ENCODE measurements at regions of chr2 and their contacts with region 1.

Region 1: DNA sequence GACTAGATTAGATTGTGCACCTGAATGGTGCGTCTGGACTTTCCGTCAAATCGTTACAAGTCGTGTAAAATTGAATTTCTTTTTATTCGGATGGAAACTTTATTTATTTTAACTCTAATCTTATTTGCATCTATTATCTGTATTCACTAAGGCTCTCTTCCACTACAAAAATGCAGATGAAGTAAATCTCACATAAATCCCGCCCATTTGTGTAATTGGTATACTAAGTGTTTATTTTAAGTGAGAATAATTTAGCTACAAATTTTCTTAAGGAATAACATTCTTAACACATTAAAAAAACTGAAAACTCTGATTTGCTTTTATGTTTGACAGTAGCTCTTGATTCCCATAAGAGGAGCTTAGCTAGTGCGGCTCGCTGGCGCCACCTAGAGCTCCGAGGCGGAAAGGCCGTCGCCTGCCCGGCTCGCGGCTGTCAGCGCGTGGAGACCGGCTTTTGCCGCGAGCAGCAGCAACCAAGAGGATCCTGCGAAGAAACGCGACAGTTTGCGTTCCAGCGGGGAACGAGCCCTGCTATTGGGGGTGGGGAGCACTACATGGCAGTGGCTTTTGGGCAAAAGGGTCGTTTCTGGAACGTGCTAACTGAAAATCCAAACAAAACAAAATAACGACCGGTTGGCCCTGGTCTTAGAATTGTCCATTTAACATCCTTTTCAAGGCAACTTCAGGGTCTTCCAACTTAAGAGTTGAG is 6.7 kb downstream of the SP9 start:
- DNase-seq: peak; percentile 78 to 90 (median 86)
- ATAC-seq: peak; percentile 87
- H3K4me3 ChIP-seq: no peak overlapping the region
- H3K4me3 Mint-ChIP-seq: peak overlapping the region; percentile 66 to 86 (median 79)
- H3K27ac ChIP-seq: no peak overlapping the region
- H3K27ac Mint-ChIP-seq: peak overlapping the region in 8 of 9 donors; percentile 73 to 93 (median 87)
- H3K4me1 ChIP-seq: peaks cover 22 to 32% of the 10 kb centered on the region in 2 donors
- H3K4me1 Mint-ChIP-seq: peaks cover 15 to 53% (median 39%) of the 10 kb centered on the region in 7 donors
- H3K27me3 ChIP-seq: peaks cover 47 to 64% of the 10 kb centered on the region in 2 donors
- H3K27me3 Mint-ChIP-seq: peaks cover 49 to 78% (median 71%) of the 10 kb centered on the region in 5 donors

Region 2: DNA sequence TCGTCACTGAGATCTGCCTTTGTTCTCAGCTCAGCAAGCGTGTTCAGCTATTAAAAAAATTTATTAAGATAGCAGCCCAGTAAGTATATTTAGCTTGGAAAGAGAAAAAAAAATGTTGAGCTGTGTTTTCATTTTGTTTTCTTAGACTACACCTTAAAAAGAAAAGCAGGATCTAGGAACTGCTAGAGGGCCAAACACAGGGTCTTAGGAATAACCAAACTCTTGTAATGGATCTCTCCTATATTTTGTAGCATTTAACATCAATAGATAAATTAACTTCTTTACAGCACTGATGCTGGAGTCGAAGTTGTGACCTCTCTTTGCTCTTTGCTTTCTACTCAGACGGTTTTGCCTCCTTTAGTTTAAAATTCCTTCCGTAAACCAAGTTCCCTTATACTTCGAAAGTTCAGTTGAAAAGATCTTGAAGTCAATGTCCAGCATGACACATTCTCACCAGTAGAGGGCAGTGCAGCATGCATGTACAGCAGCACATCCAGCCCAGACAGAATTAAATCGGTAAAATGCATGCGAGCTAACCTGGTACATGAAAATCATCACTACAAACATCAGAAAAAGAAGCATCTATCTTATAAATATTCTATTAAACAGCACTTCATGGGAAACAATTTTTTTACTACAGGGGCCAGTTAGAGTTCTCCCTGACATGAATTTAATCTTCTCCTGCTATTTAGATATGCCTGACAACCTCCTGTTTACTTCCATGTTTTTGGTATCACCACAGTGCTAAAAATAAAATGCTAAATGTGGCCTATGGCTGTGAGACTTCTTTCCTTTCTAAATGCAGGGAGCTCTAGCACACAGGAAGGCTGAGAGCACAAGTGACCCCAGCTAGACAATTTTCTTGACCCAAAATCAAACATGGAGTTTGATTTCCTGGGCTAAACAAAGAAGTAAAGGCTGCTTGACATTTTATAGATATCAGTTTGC is 1314.0 kb before region 1 on chr2:
- CTCF ChIA-PET with region 1: interaction called, 17 read pairs
- POLR2A ChIA-PET with region 1: no interaction called
- intact Hi-C with region 1: loop called (anchors 1 to 5 kb)
- DNase-seq: peak; percentile 20 to 75 (median 63)
- ATAC-seq: peak; percentile 91
- H3K4me3 ChIP-seq: no peak overlapping the region
- H3K4me3 Mint-ChIP-seq: no peak overlapping the region
- H3K27ac ChIP-seq: no peak overlapping the region
- H3K27ac Mint-ChIP-seq: no peak overlapping the region
- H3K4me1 ChIP-seq: no peaks in the 10 kb centered on the region
- H3K4me1 Mint-ChIP-seq: peaks cover 0 to 7% (median 3%) of the 10 kb centered on the region in 7 donors
- H3K27me3 ChIP-seq: no peaks in the 10 kb centered on the region
- H3K27me3 Mint-ChIP-seq: peaks cover 6 to 15% (median 9%) of the 10 kb centered on the region in 5 donors

Region 3: GRCh38 chr2:173448938-173449471 is 892.4 kb before region 1 on chr2:
- CTCF ChIA-PET with region 1: no interaction called
- POLR2A ChIA-PET with region 1: no interaction called
- intact Hi-C with region 1: loop called in 1 of 2 experiments (anchors 5 kb)
- DNase-seq: peak; percentile 12 to 55 (median 31)
- ATAC-seq: peak; percentile 75
- H3K4me3 ChIP-seq: no peak overlapping the region
- H3K4me3 Mint-ChIP-seq: peak overlapping the region in 9 of 10 donors; percentile 25 to 75 (median 46)
- H3K27ac ChIP-seq: no peak overlapping the region
- H3K27ac Mint-ChIP-seq: peak overlapping the region in 3 of 9 donors; percentile 34 to 69 (median 62)
- H3K4me1 ChIP-seq: peaks cover 0 to 8% of the 10 kb centered on the region in 2 donors
- H3K4me1 Mint-ChIP-seq: peaks cover 10 to 29% (median 15%) of the 10 kb centered on the region in 7 donors
- H3K27me3 ChIP-seq: no peaks in the 10 kb centered on the region
- H3K27me3 Mint-ChIP-seq: peaks cover 6 to 30% (median 22%) of the 10 kb centered on the region in 5 donors

Region 4: GRCh38 chr2:174039551-174040416 is 301.7 kb before region 1 on chr2:
- CTCF ChIA-PET with region 1: interaction called, 3 read pairs
- POLR2A ChIA-PET with region 1: no interaction called
- intact Hi-C with region 1: loop called (anchors 1 kb)
- DNase-seq: peak; percentile 55 to 86 (median 77)
- ATAC-seq: peak; percentile 91
- H3K4me3 ChIP-seq: peak overlapping the region; percentile 41
- H3K4me3 Mint-ChIP-seq: peak overlapping the region; percentile 32 to 81 (median 68)
- H3K27ac ChIP-seq: peak overlapping the region; percentile 82
- H3K27ac Mint-ChIP-seq: peak overlapping the region; percentile 44 to 91 (median 89)
- H3K4me1 ChIP-seq: peaks cover 0 to 5% of the 10 kb centered on the region in 2 donors
- H3K4me1 Mint-ChIP-seq: peaks cover 8 to 20% (median 11%) of the 10 kb centered on the region in 7 donors
- H3K27me3 ChIP-seq: no peaks in the 10 kb centered on the region
- H3K27me3 Mint-ChIP-seq: peaks cover 0 to 12% (median 0%) of the 10 kb centered on the region in 5 donors

Region 5: DNA sequence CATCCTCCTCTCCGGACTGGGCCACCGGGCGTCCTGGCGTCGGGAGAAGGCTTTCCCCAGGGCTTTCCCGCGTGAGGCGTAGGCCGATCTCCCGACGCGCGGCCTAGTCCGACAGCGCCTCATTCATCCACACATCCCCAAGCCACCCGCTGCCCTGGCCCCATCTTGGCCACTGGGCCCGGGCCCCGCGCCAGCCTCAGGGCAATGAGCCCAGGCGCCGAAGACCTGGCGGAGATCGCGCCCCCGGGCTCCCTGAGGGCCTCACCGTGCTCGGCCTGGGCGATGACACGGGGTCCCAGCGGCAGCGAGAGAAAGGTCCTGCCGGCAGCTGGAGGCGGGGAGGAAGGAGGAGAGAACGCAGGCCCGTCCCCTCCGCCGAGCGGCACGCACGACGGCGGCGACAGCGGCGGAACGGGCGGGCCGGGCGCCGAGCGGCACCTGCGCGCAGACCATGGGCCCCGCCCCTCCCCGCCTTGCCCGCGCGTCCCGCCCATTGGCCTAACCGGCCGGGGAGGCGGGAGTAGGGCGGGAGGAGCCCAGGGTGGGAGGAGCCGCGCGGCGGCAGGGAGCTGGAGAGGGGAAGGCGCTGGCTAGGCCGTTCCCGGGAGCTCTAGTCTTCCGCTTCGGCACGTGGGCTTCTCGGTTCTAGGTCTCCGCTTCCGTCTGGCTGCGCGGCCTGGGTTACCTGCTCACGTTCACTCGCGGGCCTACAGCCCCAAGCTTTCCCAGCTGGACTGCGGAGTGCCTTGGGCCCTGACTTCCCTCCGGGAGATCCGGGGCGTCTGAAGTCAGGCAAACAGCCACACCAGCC is 93.0 kb before region 1 on chr2 and contains the start of gene OLA1:
- CTCF ChIA-PET with region 1: interaction called, 4 read pairs
- POLR2A ChIA-PET with region 1: no interaction called
- intact Hi-C with region 1: loop called in 1 of 2 experiments (anchors 2 kb)
- DNase-seq: peak; percentile 91 to 99 (median 95)
- ATAC-seq: peak; percentile 99
- H3K4me3 ChIP-seq: peak within 1 kb of the TSS; percentile 90
- H3K4me3 Mint-ChIP-seq: peak within 1 kb of the TSS; percentile 71 to 88 (median 86)
- H3K27ac ChIP-seq: peak within 1 kb of the TSS; percentile 82
- H3K27ac Mint-ChIP-seq: peak within 1 kb of the TSS; percentile 67 to 91 (median 79)
- H3K4me1 ChIP-seq: peaks cover 6 to 12% of the 10 kb centered on the region in 2 donors
- H3K4me1 Mint-ChIP-seq: peaks cover 18 to 32% (median 25%) of the 10 kb centered on the region in 7 donors
- H3K27me3 ChIP-seq: no peaks in the 10 kb centered on the region
- H3K27me3 Mint-ChIP-seq: peaks cover 0 to 5% (median 0%) of the 10 kb centered on the region in 5 donors
- total RNA-seq, gene OLA1: 34.4 to 84.7 (median 40.3) TPM

Region 6: DNA sequence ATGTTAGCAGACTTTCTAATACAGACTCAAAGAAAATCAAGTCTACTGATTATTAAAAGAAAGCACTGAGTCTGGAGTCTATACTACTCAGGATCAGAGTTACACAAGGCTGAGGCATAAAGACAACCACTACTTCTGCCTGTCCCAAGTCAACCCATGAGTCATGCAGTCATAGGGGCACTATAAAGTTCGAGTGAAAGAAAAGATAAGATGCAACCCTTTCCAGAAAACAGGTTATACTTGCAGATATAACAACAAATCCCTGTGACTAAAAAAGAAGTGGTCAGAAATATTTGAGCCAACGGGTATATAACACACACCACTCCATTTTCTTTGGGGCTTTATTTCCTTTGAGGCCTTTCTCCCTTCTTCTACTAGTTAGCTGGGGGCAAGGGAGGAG is 35.5 kb after region 1 on chr2:
- CTCF ChIA-PET with region 1: no interaction called
- POLR2A ChIA-PET with region 1: no interaction called
- intact Hi-C with region 1: no loop called
- DNase-seq: no peak
- ATAC-seq: no peak
- H3K4me3 ChIP-seq: no peak overlapping the region
- H3K4me3 Mint-ChIP-seq: no peak overlapping the region
- H3K27ac ChIP-seq: no peak overlapping the region
- H3K27ac Mint-ChIP-seq: no peak overlapping the region
- H3K4me1 ChIP-seq: no peaks in the 10 kb centered on the region
- H3K4me1 Mint-ChIP-seq: peaks cover 0 to 10% (median 0%) of the 10 kb centered on the region in 7 donors
- H3K27me3 ChIP-seq: no peaks in the 10 kb centered on the region
- H3K27me3 Mint-ChIP-seq: no peaks in the 10 kb centered on the region

Region 7: GRCh38 chr2:176079831-176080539 is 1738.5 kb after region 1 on chr2:
- CTCF ChIA-PET with region 1: no interaction called
- POLR2A ChIA-PET with region 1: no interaction called
- intact Hi-C with region 1: loop called (anchors 5 to 10 kb)
- DNase-seq: no peak
- ATAC-seq: peak; percentile 48
- H3K4me3 ChIP-seq: no peak overlapping the region
- H3K4me3 Mint-ChIP-seq: peak overlapping the region; percentile 64 to 82 (median 76)
- H3K27ac ChIP-seq: no peak overlapping the region
- H3K27ac Mint-ChIP-seq: peak overlapping the region in 6 of 9 donors; percentile 58 to 98 (median 90)
- H3K4me1 ChIP-seq: peaks cover 0 to 7% of the 10 kb centered on the region in 2 donors
- H3K4me1 Mint-ChIP-seq: peaks cover 0 to 29% (median 15%) of the 10 kb centered on the region in 7 donors
- H3K27me3 ChIP-seq: peaks cover 41 to 79% of the 10 kb centered on the region in 2 donors
- H3K27me3 Mint-ChIP-seq: peaks cover 67 to 83% (median 80%) of the 10 kb centered on the region in 5 donors

Region 8: GRCh38 chr2:176157499-176158185 is 1816.2 kb after region 1 on chr2:
- CTCF ChIA-PET with region 1: no interaction called
- POLR2A ChIA-PET with region 1: no interaction called
- intact Hi-C with region 1: loop called in 1 of 2 experiments (anchors 10 kb)
- DNase-seq: no peak
- ATAC-seq: no peak
- H3K4me3 ChIP-seq: no peak overlapping the region
- H3K4me3 Mint-ChIP-seq: peak overlapping the region; percentile 32 to 78 (median 59)
- H3K27ac ChIP-seq: no peak overlapping the region
- H3K27ac Mint-ChIP-seq: peak overlapping the region in 2 of 9 donors; percentile 28 to 87
- H3K4me1 ChIP-seq: peaks cover 0 to 6% of the 10 kb centered on the region in 2 donors
- H3K4me1 Mint-ChIP-seq: peaks cover 0 to 22% (median 18%) of the 10 kb centered on the region in 7 donors
- H3K27me3 ChIP-seq: peaks cover 8 to 50% of the 10 kb centered on the region in 2 donors
- H3K27me3 Mint-ChIP-seq: peaks cover 70 to 91% (median 88%) of the 10 kb centered on the region in 5 donors